Right ventricle myocardium inferior (tissue), 1 donor: ENCODE measurements at regions of chr5 and their contacts with region 1.

Region 1: GRCh38 chr5:178223828-178224335 is 8.7 kb downstream of the PHYKPL start:
- DNase-seq: no peak
- ATAC-seq: no peak

Region 2: GRCh38 chr5:177967221-177967887 is 256.5 kb before region 1 on chr5:
- intact Hi-C with region 1: no loop called
- DNase-seq: no peak
- ATAC-seq: no peak

Region 3: DNA sequence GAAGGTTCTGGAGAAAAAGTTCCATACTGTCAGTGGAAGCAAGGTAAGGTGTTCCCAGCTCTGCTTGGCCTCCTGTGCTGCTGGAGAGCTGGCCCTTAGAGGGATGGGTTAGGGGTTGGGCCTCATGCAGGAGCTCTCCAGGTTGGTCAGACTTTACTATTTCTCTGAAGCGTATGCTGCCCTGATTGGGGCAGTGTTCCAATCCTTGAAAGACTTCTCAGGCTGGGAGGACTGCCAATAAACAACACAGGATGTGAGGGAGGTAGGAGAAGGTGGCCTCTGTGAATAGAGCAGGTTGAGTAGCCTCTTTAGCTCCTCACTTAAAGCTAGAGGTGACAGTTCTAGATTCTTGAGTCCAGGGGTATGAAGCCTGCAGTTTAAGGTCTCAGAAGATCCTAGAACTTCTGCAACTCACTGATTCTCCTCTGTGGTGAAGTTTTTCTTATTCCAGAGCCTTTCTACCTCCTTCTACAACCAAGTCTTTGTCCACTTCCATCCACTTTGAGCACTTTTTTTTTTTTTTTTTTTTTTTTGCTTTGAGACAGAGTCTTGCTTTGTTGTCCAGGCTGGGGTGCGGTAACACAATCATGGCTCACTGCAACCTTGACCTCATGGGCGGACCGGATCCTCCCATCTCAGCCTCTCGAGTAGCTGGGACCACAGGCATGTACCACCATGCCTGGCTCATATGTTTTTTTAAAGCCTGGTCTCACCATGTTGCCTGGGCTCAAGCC is 16.5 kb before region 1 on chr5:
- intact Hi-C with region 1: loop called (anchors 2 kb)
- DNase-seq: no peak
- ATAC-seq: no peak